IMR-90 (cell line): ENCODE measurements at regions of chr4 and their contacts with region 1.

Region 1: DNA sequence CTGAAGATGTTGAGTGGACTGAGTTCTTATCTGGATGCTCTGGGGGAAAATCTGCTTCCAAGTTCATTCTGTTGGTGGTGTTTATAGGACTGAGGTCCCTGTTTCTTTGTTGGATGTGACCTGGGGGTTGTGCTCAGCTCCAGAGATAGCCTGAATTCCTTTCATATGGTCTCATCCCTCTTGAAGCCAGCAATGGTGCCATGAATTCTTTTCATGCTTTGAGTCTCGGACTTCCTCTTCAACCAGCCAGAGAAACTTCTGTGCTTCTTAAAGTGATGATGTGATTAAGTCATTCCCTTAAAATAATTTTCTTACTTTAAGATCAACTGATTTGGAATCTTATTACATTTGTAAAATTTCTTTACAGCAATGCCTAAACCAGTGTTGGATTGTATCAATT is 233.8 kb upstream of the UGT8 start:
- DNase-seq: peak; percentile 92
- ATAC-seq: peak; percentile 87
- H3K4me3 ChIP-seq: peak overlapping the region; percentile 47; the same call in 1 of the 2 replicates
- H3K27ac ChIP-seq: peak overlapping the region; percentile 73
- H3K4me1 ChIP-seq: peaks cover 6% of the 10 kb centered on the region
- H3K27me3 ChIP-seq: no peaks in the 10 kb centered on the region
- CTCF ChIP-seq: no peak
- POLR2A ChIP-seq: peak; percentile 22; the same call in 1 of the 2 replicates
- RAD21 ChIP-seq: no peak

Region 2: GRCh38 chr4:113547487-113548042 is 817.3 kb before region 1 on chr4:
- CTCF ChIA-PET with region 1: no interaction called
- POLR2A ChIA-PET with region 1: no interaction called
- dilution Hi-C with region 1: no loop called
- in situ Hi-C with region 1: loop called (anchors 25 kb)
- intact Hi-C with region 1: no loop called
- DNase-seq: peak; percentile 95
- ATAC-seq: peak; percentile 99
- H3K4me3 ChIP-seq: no peak overlapping the region
- H3K27ac ChIP-seq: no peak overlapping the region
- H3K4me1 ChIP-seq: no peaks in the 10 kb centered on the region
- H3K27me3 ChIP-seq: no peaks in the 10 kb centered on the region
- CTCF ChIP-seq: peak; percentile 90
- POLR2A ChIP-seq: no peak
- RAD21 ChIP-seq: peak; percentile 78

Region 3: DNA sequence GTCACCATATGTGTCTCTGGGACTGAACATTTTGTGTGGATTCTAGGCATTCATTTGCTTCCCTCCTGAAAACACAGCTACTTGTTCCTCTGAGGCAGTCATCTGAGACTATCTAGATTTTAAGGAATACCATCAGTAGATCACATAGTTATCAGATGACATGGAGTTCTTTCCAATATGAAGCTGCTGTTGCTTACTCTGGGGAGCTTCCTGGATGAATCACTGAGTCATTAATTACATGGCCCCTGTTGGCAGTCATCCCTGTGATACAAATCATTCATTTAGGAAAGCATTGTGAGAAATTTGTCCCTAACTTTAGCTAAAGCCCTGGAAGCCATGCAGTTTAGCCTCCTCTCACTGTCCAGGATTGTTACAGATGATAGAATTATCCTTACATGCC is 287.2 kb before region 1 on chr4:
- CTCF ChIA-PET with region 1: no interaction called
- POLR2A ChIA-PET with region 1: no interaction called
- dilution Hi-C with region 1: no loop called
- in situ Hi-C with region 1: no loop called
- intact Hi-C with region 1: loop called (anchors 5 kb)
- DNase-seq: peak; percentile 92
- ATAC-seq: peak; percentile 98
- H3K4me3 ChIP-seq: no peak overlapping the region
- H3K27ac ChIP-seq: no peak overlapping the region
- H3K4me1 ChIP-seq: peaks cover 8% of the 10 kb centered on the region
- H3K27me3 ChIP-seq: no peaks in the 10 kb centered on the region
- CTCF ChIP-seq: no peak
- POLR2A ChIP-seq: no peak
- RAD21 ChIP-seq: no peak

Region 4: DNA sequence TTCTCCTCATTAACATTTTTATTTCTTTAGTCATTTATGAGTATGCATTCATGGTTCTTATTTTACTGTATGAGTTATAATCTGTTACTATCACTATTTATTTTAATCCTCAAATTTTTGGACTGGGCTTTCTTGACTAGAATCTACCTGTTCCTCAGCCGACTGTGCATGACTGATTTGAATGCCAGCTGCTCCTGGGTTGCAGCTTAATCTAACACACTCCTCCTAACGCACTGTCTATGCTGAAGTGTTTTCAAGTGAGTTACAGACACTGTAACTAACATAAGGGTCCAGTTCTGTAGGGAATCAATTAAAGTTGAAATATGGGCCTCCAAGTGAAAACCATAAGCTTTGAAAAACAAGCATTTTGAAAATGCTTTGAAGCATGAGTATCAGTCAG is 248.0 kb before region 1 on chr4:
- CTCF ChIA-PET with region 1: no interaction called
- POLR2A ChIA-PET with region 1: no interaction called
- dilution Hi-C with region 1: no loop called
- in situ Hi-C with region 1: no loop called
- intact Hi-C with region 1: no loop called
- DNase-seq: no peak
- ATAC-seq: no peak
- H3K4me3 ChIP-seq: no peak overlapping the region
- H3K27ac ChIP-seq: no peak overlapping the region
- H3K4me1 ChIP-seq: no peaks in the 10 kb centered on the region
- H3K27me3 ChIP-seq: no peaks in the 10 kb centered on the region
- CTCF ChIP-seq: no peak
- POLR2A ChIP-seq: no peak
- RAD21 ChIP-seq: no peak

Region 5: DNA sequence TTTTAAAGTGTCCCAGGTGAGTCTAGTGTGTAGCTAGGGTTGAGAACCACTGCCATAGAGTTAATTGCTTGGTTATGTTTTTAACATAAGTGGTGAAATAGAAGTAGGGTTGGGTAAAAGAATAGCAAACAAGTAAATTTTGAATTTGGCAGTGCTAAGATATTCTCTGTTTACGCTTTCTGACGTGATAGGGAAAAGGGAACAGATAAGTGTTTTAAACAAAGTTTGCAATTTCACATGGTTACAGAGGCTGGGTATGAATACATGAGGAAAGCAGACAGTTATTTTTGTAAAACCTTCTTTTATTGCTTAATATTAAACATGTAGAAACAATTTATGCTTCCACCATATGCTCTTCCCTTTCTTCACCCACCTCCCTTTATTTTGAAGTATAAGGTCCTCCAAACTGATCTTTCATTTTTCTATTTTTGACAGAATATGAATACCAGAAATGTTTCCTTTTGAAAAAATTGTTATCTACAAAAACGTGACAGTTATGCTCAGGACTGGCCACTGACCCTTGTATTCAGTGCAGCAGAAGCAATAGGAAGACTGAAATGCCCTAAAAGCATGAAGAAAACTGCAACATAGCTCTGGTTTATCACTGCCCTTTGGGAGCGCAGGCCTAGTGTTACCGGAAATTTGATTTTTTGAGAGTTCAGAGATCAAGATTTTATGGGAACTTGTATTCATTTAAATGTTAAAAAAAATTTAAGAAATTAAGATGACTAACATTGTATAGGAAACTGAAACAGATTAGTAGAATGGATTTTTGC is 171.0 kb before region 1 on chr4:
- CTCF ChIA-PET with region 1: no interaction called
- POLR2A ChIA-PET with region 1: no interaction called
- dilution Hi-C with region 1: no loop called
- in situ Hi-C with region 1: no loop called
- intact Hi-C with region 1: loop called (anchors 5 kb)
- DNase-seq: peak; percentile 29
- ATAC-seq: peak; percentile 60
- H3K4me3 ChIP-seq: no peak overlapping the region
- H3K27ac ChIP-seq: no peak overlapping the region
- H3K4me1 ChIP-seq: no peaks in the 10 kb centered on the region
- H3K27me3 ChIP-seq: no peaks in the 10 kb centered on the region
- CTCF ChIP-seq: no peak
- POLR2A ChIP-seq: no peak
- RAD21 ChIP-seq: no peak

Region 6: DNA sequence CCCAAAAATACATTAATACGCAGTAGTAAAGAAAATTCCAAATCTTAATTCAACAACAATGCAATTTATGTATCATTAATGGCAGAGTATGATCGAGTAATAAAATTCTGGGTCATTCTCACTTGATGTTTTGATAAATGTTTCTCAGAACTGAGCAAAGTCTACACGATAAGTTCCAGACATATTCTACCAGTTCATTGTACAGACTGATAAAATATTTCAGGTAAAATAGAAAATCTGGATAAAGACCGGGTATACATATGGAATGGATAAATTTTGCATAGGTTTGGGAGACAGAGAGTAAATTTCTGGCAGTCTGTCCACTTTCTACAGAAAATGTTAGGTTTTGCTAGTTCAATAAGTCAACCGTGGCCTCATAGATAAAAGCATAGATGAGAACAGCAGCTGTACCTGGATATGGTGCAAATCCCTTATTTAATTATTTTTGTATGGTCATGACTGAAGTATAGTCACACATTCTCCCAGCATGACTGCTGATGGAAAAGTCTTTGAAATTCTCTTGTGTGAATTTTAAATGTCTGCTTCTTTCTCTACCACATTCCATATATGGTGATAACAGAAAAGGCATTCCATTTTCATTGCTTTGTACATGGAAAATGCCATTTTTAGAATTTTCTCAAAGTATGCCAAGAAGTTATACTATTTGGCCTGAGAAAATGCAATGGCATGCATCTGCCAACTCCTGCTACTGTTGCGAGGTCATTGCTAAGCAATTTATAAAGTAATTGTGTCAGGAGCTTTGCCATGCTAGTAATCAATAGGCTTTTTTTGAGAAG is 83.5 kb before region 1 on chr4:
- CTCF ChIA-PET with region 1: no interaction called
- POLR2A ChIA-PET with region 1: no interaction called
- dilution Hi-C with region 1: no loop called
- in situ Hi-C with region 1: no loop called
- intact Hi-C with region 1: loop called (anchors 1 kb)
- DNase-seq: peak; percentile 91
- ATAC-seq: peak; percentile 82
- H3K4me3 ChIP-seq: no peak overlapping the region
- H3K27ac ChIP-seq: peak overlapping the region; percentile 78; the same call in 1 of the 2 replicates
- H3K4me1 ChIP-seq: peaks cover 3% of the 10 kb centered on the region; the same call in 1 of the 2 replicates
- H3K27me3 ChIP-seq: no peaks in the 10 kb centered on the region
- CTCF ChIP-seq: no peak
- POLR2A ChIP-seq: no peak
- RAD21 ChIP-seq: no peak

Region 7: GRCh38 chr4:114435116-114435515 is 70.3 kb after region 1 on chr4:
- CTCF ChIA-PET with region 1: no interaction called
- POLR2A ChIA-PET with region 1: no interaction called
- dilution Hi-C with region 1: no loop called
- in situ Hi-C with region 1: no loop called
- intact Hi-C with region 1: no loop called
- DNase-seq: no peak
- ATAC-seq: no peak
- H3K4me3 ChIP-seq: no peak overlapping the region
- H3K27ac ChIP-seq: no peak overlapping the region
- H3K4me1 ChIP-seq: no peaks in the 10 kb centered on the region
- H3K27me3 ChIP-seq: no peaks in the 10 kb centered on the region
- CTCF ChIP-seq: no peak
- POLR2A ChIP-seq: no peak
- RAD21 ChIP-seq: no peak